B cell (primary cell): ENCODE measurements at regions of chr7 and their contacts with region 1.

Region 1: DNA sequence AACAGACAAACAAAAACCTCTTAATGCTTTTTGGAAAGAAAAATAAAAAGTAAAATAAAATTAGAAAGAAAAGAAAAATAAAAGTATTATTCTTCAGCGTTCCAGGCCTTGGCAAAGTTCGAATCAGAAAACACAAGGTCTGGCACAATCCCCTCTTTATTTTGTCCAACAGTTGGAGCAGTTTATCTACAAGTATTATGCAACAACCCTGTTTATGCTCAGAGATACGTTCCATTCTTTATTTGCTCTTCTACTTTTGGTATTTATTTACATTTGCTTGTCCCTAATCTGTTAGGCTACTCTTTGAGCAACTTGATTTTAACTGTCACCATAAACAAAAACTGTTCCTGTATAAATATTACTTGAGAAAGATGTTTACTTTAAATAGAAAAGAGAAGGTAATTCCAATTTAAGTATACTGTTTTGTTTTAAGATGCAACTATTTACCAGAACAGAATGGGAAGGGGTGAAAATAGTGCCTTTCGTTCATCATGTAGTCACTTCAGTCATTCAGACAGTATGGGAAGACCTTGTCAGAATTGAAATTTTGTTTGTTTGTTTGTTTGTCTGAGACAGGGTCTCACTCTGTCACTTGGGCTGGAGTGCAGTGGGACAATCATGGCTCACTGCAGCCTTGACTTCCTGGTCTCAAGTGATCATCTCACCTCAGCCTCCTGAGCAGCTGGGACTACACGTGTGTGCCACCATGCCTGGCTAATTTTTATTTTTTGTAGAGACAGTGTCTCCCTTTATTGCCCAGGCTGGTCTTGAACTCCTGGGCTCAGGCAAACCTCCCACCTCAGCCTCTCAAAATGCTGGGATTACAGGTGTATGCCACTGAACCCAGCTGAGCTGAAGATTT is 5.7 kb downstream of the PDK4 start:
- DNase-seq: no peak
- ATAC-seq: no peak
- H3K4me3 ChIP-seq: no peak overlapping the region
- H3K4me3 Mint-ChIP-seq: no peak overlapping the region
- H3K27ac ChIP-seq: no peak overlapping the region
- H3K27ac Mint-ChIP-seq: no peak overlapping the region
- H3K4me1 ChIP-seq: peaks cover under 1 to 4% of the 10 kb centered on the region in 2 donors
- H3K4me1 Mint-ChIP-seq: peaks cover 17% of the 10 kb centered on the region
- H3K27me3 ChIP-seq: no peaks in the 10 kb centered on the region
- H3K27me3 Mint-ChIP-seq: peaks cover 3% of the 10 kb centered on the region
- CTCF ChIP-seq: no peak

Region 2: DNA sequence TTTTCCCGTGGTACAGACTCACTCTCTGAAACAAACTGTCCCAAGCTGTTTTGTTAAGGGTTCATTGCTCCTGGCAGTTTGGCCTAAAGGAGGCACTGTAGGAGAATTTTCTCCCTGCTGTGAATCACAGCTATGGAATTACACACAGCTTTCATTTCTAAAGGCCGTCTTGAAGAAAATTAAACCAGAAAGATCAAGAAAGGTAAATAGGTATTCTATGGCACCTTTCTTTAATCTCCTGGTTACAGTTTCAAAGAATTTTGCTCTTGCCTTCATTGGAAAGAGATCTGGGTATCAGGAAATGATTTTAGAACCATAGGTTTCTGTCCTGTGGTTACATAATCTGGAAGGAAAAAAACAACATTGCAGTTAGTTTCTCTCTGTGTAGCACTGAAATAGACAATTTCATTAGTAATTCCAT is 45.5 kb before region 1 on chr7:
- CTCF ChIA-PET with region 1: no interaction called
- POLR2A ChIA-PET with region 1: no interaction called
- intact Hi-C with region 1: loop called (anchors 5 kb)
- DNase-seq: peak; percentile 26
- ATAC-seq: no peak
- H3K4me3 ChIP-seq: no peak overlapping the region
- H3K4me3 Mint-ChIP-seq: peak overlapping the region; percentile 0
- H3K27ac ChIP-seq: no peak overlapping the region
- H3K27ac Mint-ChIP-seq: no peak overlapping the region
- H3K4me1 ChIP-seq: peaks cover 3 to 8% of the 10 kb centered on the region in 2 donors
- H3K4me1 Mint-ChIP-seq: peaks cover 9% of the 10 kb centered on the region
- H3K27me3 ChIP-seq: no peaks in the 10 kb centered on the region
- H3K27me3 Mint-ChIP-seq: peaks cover 3% of the 10 kb centered on the region
- CTCF ChIP-seq: no peak

Region 3: GRCh38 chr7:95577137-95577536 is 13.5 kb before region 1 on chr7:
- CTCF ChIA-PET with region 1: no interaction called
- POLR2A ChIA-PET with region 1: no interaction called
- intact Hi-C with region 1: no loop called
- DNase-seq: no peak
- ATAC-seq: no peak
- H3K4me3 ChIP-seq: no peak overlapping the region
- H3K4me3 Mint-ChIP-seq: no peak overlapping the region
- H3K27ac ChIP-seq: no peak overlapping the region
- H3K27ac Mint-ChIP-seq: no peak overlapping the region
- H3K4me1 ChIP-seq: no peaks in the 10 kb centered on the region
- H3K4me1 Mint-ChIP-seq: no peaks in the 10 kb centered on the region
- H3K27me3 ChIP-seq: peaks cover 0 to 3% (median 0%) of the 10 kb centered on the region in 4 experiments
- H3K27me3 Mint-ChIP-seq: peaks cover 18% of the 10 kb centered on the region
- CTCF ChIP-seq: no peak